Pancreas (tissue), 10 donors: ENCODE measurements at regions of chr5 and their contacts with region 1.

Region 1: GRCh38 chr5:174311531-174312269 is 266.2 kb downstream of the NSG2 start:
- DNase-seq: peak; percentile 47 to 94 (median 76)
- ATAC-seq: peak; percentile 88 to 96 (median 96)
- H3K4me3 ChIP-seq: peak overlapping the region; percentile 5 to 49 (median 26)
- H3K27ac ChIP-seq: no peak overlapping the region
- H3K4me1 ChIP-seq: no peaks in the 10 kb centered on the region
- H3K27me3 ChIP-seq: no peaks in the 10 kb centered on the region
- CTCF ChIP-seq: peak; percentile 85 to 94 (median 90)

Region 2: DNA sequence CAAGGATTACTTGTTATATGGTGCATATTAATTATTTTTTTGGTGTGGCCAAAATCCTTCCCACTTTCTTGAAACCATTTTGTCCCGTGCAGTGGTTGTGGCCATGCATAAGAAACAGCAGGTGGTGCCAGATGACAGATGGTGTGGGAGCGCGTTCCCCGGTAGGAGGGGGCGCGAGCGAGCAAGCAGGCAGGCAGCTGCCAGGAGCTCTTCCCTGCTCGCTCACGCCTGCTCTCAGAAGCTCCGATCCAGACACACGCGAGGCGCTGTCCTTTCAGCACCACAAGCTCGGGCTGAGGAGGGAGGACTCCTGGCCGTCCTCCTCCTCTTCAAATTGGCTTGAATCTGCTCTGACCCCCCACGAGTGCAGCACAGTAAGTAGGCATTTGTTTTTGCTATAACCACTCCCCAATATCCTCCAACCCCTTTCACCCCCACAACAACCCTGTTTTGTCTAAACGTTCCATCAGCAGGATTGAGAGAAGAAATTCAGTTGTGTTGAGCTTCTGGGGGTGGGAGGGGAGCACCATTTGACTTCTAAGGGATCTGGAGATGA is 266.2 kb before region 1 on chr5 and contains the start of gene NSG2:
- intact Hi-C with region 1: loop called (anchors 5 to 10 kb)
- DNase-seq: peak; percentile 83 to 96 (median 88)
- ATAC-seq: peak; percentile 100
- H3K4me3 ChIP-seq: no peak within 1 kb of the TSS
- H3K27ac ChIP-seq: no peak within 1 kb of the TSS
- H3K4me1 ChIP-seq: no peaks in the 10 kb centered on the region
- H3K27me3 ChIP-seq: peaks cover 0 to 6% (median 0%) of the 10 kb centered on the region in 4 donors
- CTCF ChIP-seq: peak; percentile 30 to 65 (median 53)
- total RNA-seq, gene NSG2: 0.19 to 0.70 (median 0.38) TPM